ENCODE measurements at regions of chr14 and their contacts with region 1.

Region 1: DNA sequence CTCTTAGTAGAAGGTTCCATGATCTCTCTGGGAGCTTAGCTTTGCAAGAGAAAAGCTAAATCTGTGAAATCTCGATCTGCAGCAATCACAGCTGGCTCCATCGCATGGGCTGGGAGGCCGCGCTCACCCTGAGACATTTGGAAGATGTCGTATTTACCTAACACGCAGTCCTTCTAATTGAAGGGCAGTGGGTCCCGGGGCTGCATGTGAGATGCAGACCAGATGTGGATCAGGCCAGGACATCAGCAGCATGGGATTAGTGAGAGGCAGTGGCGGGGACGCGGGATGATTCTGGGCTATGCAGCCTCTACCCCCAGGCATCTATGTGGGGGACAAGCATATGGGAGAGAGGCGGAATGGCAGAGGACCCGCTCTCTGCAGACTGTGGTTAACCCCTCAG is 312.4 kb upstream of the RTL1 start:
- DNase-seq: peak in 2 of 7 donors; percentile 10 to 46
- H3K4me3 ChIP-seq: no peak overlapping the region
- H3K27ac ChIP-seq: no peak overlapping the region
- H3K4me1 ChIP-seq: no peaks in the 10 kb centered on the region
- H3K27me3 ChIP-seq: no peaks in the 10 kb centered on the region
- CTCF ChIP-seq: no peak
- POLR2A ChIP-seq: no peak

Region 2: GRCh38 chr14:101098641-101099040 is 117.3 kb before region 1 on chr14:
- intact Hi-C with region 1: no loop called
- DNase-seq: peak in 1 of 7 donors; percentile 21
- H3K4me3 ChIP-seq: no peak overlapping the region
- H3K27ac ChIP-seq: no peak overlapping the region
- H3K4me1 ChIP-seq: no peaks in the 10 kb centered on the region
- H3K27me3 ChIP-seq: no peaks in the 10 kb centered on the region
- CTCF ChIP-seq: no peak
- POLR2A ChIP-seq: no peak

Region 3: DNA sequence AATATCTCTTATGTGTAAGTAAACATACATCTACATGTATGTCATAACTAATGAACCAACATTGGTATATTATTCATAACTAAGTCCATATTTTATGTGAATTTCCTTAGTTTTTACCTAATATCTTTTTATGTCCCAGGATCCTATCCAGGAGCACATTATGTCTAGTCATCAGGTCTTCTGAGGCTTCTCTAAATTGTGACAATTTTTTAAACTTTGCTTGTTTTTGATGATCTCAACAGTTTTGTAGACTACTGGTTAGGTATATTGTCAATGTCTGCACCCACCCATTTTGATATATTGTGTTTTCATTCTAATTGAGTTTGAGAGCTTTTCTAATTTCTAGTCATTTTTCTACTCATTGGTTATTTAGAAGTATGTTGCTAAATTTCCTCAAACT is 57.2 kb after region 1 on chr14:
- intact Hi-C with region 1: loop called in 1 of 2 experiments (anchors 5 kb)
- DNase-seq: no peak
- H3K4me3 ChIP-seq: no peak overlapping the region
- H3K27ac ChIP-seq: no peak overlapping the region
- H3K4me1 ChIP-seq: no peaks in the 10 kb centered on the region
- H3K27me3 ChIP-seq: peaks cover 21% of the 10 kb centered on the region
- CTCF ChIP-seq: no peak
- POLR2A ChIP-seq: no peak